Heart right ventricle (tissue), 16 donors: ENCODE measurements at regions of chr5 and their contacts with region 1.

Region 1: DNA sequence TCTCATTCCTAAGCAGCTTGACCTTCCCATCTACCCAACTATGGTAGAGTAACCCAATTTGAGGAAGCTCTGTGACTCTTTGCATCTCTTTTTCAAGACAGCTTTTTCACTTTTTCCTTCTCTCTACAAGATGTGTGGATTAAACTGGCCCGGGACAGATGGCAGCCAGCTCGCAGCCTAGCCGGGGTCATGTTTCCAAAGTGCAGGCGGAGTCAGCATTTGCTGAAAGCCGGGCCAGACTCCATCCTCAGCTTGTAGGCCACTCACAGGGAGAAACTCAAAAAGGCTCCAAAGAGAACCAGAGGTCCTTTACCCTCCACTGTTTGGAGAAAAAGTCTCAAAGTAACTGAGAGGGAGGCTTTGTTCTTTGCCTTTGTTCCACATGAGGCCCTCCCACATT is 286.8 kb upstream of the PANK3 start:
- DNase-seq: no peak
- ATAC-seq: no peak
- H3K4me3 ChIP-seq: no peak overlapping the region
- H3K27ac ChIP-seq: no peak overlapping the region
- H3K4me1 ChIP-seq: peaks cover 0 to 9% (median 0%) of the 10 kb centered on the region in 9 donors
- H3K27me3 ChIP-seq: no peaks in the 10 kb centered on the region
- CTCF ChIP-seq: no peak

Region 2: DNA sequence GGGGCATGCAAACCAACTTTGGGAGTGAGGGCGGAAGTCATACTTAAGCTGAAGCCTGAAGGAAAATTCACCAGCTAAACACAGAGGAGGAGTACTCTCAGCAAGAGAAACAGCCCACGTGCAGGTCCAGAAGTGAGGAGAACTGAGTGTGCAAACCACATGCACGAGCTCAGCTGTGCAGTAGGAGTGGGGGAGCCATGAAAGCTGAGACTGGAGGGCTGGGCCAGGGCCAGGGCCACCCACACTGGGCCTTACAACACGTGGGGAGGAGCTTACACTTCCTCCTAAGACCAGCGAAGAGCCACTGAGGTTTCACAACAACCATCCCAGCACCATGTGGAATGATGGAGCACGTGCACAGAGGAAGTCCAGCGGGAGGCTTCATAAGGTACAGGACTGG is 583.8 kb before region 1 on chr5:
- intact Hi-C with region 1: no loop called
- DNase-seq: no peak
- ATAC-seq: peak in 2 of 8 donors; percentile 34 to 44
- H3K4me3 ChIP-seq: no peak overlapping the region
- H3K27ac ChIP-seq: no peak overlapping the region
- H3K4me1 ChIP-seq: no peaks in the 10 kb centered on the region
- H3K27me3 ChIP-seq: peaks cover 0 to 21% (median 0%) of the 10 kb centered on the region in 7 donors
- CTCF ChIP-seq: no peak

Region 3: GRCh38 chr5:168847511-168848073 is 18.4 kb before region 1 on chr5:
- intact Hi-C with region 1: loop called in 1 of 10 experiments (anchors 1 kb)
- DNase-seq: no peak
- ATAC-seq: no peak
- H3K4me3 ChIP-seq: no peak overlapping the region
- H3K27ac ChIP-seq: no peak overlapping the region
- H3K4me1 ChIP-seq: peaks cover 0 to 33% (median 5%) of the 10 kb centered on the region in 9 donors
- H3K27me3 ChIP-seq: no peaks in the 10 kb centered on the region
- CTCF ChIP-seq: no peak